ENCODE measurements at regions of chr6 and their contacts with region 1.

Region 1: DNA sequence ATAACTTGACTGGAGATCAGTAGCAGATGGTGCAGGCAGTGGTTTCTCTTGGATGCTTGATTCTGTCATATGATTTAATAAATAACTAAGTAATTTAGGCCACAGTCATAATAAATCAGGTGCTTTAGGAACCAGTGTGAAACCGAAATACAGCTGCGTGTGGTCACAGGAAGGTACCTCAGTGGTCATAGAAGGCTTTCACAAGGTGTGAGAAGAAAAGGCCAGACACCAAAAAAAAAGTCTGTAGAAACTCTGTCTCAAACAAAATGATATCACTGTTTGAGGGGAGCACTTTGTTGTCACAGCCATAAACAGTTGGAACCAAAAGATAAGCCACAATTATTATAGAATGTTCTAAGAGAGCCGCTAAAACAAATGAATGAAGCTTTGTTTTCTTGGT is 56.5 kb downstream of the ARMC2 start:
- DNase-seq: no peak
- H3K4me3 ChIP-seq: no peak overlapping the region
- H3K4me1 ChIP-seq: no peaks in the 10 kb centered on the region
- H3K27me3 ChIP-seq: peaks cover 9% of the 10 kb centered on the region

Region 2: DNA sequence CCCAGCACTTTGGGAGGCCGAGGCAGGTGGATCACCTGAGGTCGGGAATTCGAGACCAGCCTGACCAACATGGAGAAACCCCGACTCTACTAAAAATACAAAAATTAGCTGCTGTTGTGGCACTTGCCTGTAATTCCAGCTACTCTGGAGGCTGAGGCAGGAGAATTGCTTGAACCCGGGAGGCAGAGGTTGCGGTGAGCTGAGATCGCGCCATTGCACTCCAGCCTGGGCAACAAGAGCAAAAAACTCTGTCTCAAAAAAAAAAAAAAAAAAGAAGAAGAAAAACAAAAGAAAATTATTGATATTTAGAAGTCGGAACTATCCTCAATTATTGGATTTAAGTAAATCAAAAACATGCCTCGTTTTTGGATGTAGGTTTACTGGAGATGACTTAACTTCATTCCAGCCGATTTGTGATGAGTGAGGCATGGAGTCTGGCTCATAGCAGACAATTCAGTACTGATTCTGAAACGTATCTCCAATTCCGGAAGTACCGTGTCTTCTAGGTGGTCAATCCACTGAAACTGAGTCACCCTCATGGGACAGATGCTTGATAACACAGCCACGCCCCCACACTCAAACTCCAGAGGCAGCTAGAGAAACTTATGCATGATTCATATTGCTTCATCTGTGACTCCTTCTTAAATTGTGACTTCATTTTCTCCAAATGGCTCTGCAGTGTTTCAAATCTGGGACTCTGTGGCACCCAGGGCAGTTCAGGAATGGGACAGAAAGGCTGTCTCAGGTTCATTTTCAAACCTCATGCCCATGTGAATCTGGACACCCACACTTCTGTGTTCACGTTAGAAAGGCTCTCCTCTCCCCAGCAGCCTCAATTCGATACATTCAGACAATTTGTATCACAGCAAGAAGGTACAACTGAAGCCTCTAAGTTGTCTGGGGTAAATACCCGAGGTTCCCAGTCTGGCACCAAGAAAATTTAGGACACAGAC is 166.9 kb before region 1 on chr6:
- in situ Hi-C with region 1: no loop called
- DNase-seq: no peak
- H3K4me3 ChIP-seq: no peak overlapping the region
- H3K4me1 ChIP-seq: peaks cover 10% of the 10 kb centered on the region
- H3K27me3 ChIP-seq: no peaks in the 10 kb centered on the region

Region 3: GRCh38 chr6:109059571-109060021 is 154.9 kb after region 1 on chr6:
- in situ Hi-C with region 1: loop called (anchors 10 kb)
- DNase-seq: no peak
- H3K4me3 ChIP-seq: no peak overlapping the region
- H3K4me1 ChIP-seq: no peaks in the 10 kb centered on the region
- H3K27me3 ChIP-seq: no peaks in the 10 kb centered on the region